ENCODE measurements at regions of chr1 and their contacts with region 1.

Region 1: DNA sequence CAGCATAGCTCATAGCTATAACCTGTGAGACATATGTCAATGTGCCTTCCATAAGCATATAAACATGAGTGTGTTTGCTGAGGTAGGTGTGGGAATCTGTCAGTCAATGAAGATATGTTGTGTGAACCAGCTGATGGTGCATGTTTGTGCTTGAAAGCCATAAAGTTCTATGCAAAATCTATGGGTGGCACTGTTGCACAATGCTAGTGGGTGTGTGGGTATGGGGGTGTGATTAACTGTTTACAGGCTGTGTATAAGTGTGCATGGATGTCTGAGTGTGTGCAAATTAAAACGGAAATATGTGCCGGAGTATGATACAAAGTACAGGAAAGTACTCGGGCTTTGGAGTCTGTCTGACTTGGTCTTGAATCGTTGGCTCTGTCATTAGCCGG is 1.0 kb upstream of the ATP2B4 start:
- DNase-seq: no peak
- ATAC-seq: no peak
- H3K4me3 ChIP-seq: peak overlapping the region in 2 of 4 donors; percentile 69 to 78
- H3K27ac ChIP-seq: peak overlapping the region; percentile 80 to 84 (median 82)
- H3K4me1 ChIP-seq: peaks cover 23 to 40% of the 10 kb centered on the region in 2 donors
- H3K27me3 ChIP-seq: no peaks in the 10 kb centered on the region
- CTCF ChIP-seq: no peak
- POLR2A ChIP-seq: no peak

Region 2: GRCh38 chr1:203504397-203505250 is 121.0 kb before region 1 on chr1:
- in situ Hi-C with region 1: loop called in 1 of 4 experiments (anchors 10 kb)
- intact Hi-C with region 1: loop called (anchors 5 kb)
- DNase-seq: peak; percentile 60 to 70
- ATAC-seq: peak; percentile 78 to 88
- H3K4me3 ChIP-seq: no peak overlapping the region
- H3K27ac ChIP-seq: no peak overlapping the region
- H3K4me1 ChIP-seq: peaks cover 11 to 13% of the 10 kb centered on the region in 2 donors
- H3K27me3 ChIP-seq: no peaks in the 10 kb centered on the region
- CTCF ChIP-seq: peak; percentile 65 to 94 (median 85)
- POLR2A ChIP-seq: no peak

Region 3: GRCh38 chr1:203558064-203558760 is 67.4 kb before region 1 on chr1:
- in situ Hi-C with region 1: loop called in 1 of 4 experiments (anchors 5 kb)
- intact Hi-C with region 1: loop called (anchors 2 kb)
- DNase-seq: peak; percentile 61 to 75
- ATAC-seq: peak; percentile 87 to 92
- H3K4me3 ChIP-seq: no peak overlapping the region
- H3K27ac ChIP-seq: peak overlapping the region; percentile 81 to 88 (median 85)
- H3K4me1 ChIP-seq: peaks cover 42 to 44% of the 10 kb centered on the region in 2 donors
- H3K27me3 ChIP-seq: no peaks in the 10 kb centered on the region
- CTCF ChIP-seq: no peak
- POLR2A ChIP-seq: peak in 1 of 2 donors; percentile 24

Region 4: GRCh38 chr1:203673550-203674427 is 48.2 kb after region 1 on chr1:
- in situ Hi-C with region 1: no loop called
- intact Hi-C with region 1: loop called (anchors 5 kb)
- DNase-seq: peak in 1 of 2 donors; percentile 53
- ATAC-seq: peak; percentile 61 to 75
- H3K4me3 ChIP-seq: no peak overlapping the region
- H3K27ac ChIP-seq: peak overlapping the region; percentile 64 to 82 (median 70)
- H3K4me1 ChIP-seq: peaks cover 38 to 45% of the 10 kb centered on the region in 2 donors
- H3K27me3 ChIP-seq: no peaks in the 10 kb centered on the region
- CTCF ChIP-seq: peak in 1 of 5 experiments; percentile 14
- POLR2A ChIP-seq: no peak

Region 5: DNA sequence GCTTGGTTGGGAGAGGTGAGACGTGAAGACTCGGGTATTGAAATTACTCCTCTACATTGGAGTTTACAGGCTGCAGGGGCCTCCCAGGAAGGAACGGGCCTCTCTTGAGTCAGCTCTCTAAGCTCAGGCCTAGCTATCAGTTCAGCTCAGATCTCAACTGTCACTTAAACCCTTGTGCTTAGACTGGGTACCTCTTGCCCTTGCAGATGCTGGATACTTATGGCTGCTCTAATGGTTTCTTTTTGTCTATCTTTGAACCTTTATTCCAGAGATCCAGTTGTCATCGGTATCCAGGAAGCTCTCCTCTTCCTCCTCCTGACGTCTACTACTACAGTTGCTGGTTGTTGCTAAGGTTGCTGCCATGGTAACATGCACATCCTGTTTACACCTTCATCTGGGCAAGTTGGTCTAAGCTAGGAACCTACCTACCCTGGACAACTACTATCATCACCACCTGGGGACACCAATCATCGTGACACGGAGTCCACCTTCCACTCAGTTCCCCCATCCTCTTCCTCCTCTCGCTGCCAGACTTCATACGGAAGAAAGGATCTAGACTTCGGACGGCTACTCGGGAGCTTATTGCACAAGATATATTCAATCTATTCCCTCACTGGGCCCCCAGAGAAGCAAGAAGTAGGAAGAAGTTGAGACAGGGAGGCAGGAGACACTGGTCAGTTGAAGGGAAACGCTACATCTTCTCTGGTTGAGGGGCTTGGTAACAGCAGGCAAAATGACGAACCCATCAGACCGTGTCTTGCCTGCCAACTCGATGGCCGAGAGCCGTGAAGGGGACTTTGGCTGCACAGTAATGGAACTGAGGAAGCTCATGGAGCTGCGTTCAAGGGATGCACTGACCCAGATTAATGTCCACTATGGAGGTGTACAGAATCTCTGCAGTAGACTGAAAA is 57.1 kb after region 1 on chr1:
- in situ Hi-C with region 1: loop called in 1 of 4 experiments (anchors 5 kb)
- intact Hi-C with region 1: no loop called
- DNase-seq: no peak
- ATAC-seq: no peak
- H3K4me3 ChIP-seq: no peak overlapping the region
- H3K27ac ChIP-seq: peak overlapping the region in 2 of 4 donors; percentile 14 to 16
- H3K4me1 ChIP-seq: peaks cover 12 to 13% of the 10 kb centered on the region in 2 donors
- H3K27me3 ChIP-seq: no peaks in the 10 kb centered on the region
- CTCF ChIP-seq: no peak
- POLR2A ChIP-seq: no peak

Region 6: GRCh38 chr1:203692565-203693470 is 67.2 kb after region 1 on chr1:
- in situ Hi-C with region 1: loop called in 1 of 4 experiments (anchors 5 kb)
- intact Hi-C with region 1: loop called (anchors 1 kb)
- DNase-seq: peak; percentile 57 to 83
- ATAC-seq: peak; percentile 86 to 90
- H3K4me3 ChIP-seq: peak overlapping the region in 1 of 4 donors; percentile 15
- H3K27ac ChIP-seq: peak overlapping the region; percentile 53 to 79 (median 74)
- H3K4me1 ChIP-seq: peaks cover 31 to 40% of the 10 kb centered on the region in 2 donors
- H3K27me3 ChIP-seq: no peaks in the 10 kb centered on the region
- CTCF ChIP-seq: no peak
- POLR2A ChIP-seq: no peak

Region 7: GRCh38 chr1:203769505-203770343 is 144.1 kb after region 1 on chr1:
- in situ Hi-C with region 1: no loop called
- intact Hi-C with region 1: loop called (anchors 10 kb)
- DNase-seq: peak; percentile 53 to 80
- ATAC-seq: peak; percentile 52 to 67
- H3K4me3 ChIP-seq: peak overlapping the region; percentile 17 to 43 (median 24)
- H3K27ac ChIP-seq: peak overlapping the region; percentile 33 to 72 (median 67)
- H3K4me1 ChIP-seq: peaks cover 27 to 28% of the 10 kb centered on the region in 2 donors
- H3K27me3 ChIP-seq: no peaks in the 10 kb centered on the region
- CTCF ChIP-seq: no peak
- POLR2A ChIP-seq: no peak